Activated CD4-positive, alpha-beta memory T cell treated with anti-CD3 and anti-CD28 coated beads for 36 hours (primary cell): ENCODE measurements at regions of chr3 and their contacts with region 1.

Region 1: DNA sequence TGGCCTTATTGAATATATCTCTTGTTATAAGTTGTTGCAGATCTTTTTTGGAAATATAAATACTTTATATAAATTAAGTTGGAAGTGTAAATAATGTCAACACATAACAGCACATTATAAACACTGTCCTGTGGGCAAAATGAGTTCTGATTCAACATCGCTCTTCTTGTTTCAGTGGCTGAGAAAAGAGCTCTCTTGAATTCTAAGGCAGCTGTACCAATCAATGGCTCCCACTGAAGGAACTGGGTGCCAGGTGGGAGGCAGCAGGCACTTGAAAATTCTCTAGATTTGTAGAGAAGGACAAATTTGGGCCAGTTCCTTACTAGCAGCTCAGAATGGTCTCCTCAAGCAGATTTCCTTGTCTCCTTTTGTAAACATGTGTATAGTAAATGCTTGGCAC is 45.6 kb downstream of the CHST2 start:
- DNase-seq: no peak
- H3K4me3 Mint-ChIP-seq: peak overlapping the region; percentile 22
- H3K27ac Mint-ChIP-seq: peak overlapping the region; percentile 87
- H3K4me1 Mint-ChIP-seq: peaks cover 56% of the 10 kb centered on the region
- H3K27me3 Mint-ChIP-seq: peaks cover 2% of the 10 kb centered on the region

Region 2: GRCh38 chr3:143060906-143061305 is 104.3 kb before region 1 on chr3:
- CTCF ChIA-PET with region 1: no interaction called
- POLR2A ChIA-PET with region 1: no interaction called
- intact Hi-C with region 1: loop called (anchors 1 kb)
- DNase-seq: no peak
- H3K4me3 Mint-ChIP-seq: no peak overlapping the region
- H3K27ac Mint-ChIP-seq: peak overlapping the region; percentile 42
- H3K4me1 Mint-ChIP-seq: peaks cover 22% of the 10 kb centered on the region
- H3K27me3 Mint-ChIP-seq: no peaks in the 10 kb centered on the region

Region 3: DNA sequence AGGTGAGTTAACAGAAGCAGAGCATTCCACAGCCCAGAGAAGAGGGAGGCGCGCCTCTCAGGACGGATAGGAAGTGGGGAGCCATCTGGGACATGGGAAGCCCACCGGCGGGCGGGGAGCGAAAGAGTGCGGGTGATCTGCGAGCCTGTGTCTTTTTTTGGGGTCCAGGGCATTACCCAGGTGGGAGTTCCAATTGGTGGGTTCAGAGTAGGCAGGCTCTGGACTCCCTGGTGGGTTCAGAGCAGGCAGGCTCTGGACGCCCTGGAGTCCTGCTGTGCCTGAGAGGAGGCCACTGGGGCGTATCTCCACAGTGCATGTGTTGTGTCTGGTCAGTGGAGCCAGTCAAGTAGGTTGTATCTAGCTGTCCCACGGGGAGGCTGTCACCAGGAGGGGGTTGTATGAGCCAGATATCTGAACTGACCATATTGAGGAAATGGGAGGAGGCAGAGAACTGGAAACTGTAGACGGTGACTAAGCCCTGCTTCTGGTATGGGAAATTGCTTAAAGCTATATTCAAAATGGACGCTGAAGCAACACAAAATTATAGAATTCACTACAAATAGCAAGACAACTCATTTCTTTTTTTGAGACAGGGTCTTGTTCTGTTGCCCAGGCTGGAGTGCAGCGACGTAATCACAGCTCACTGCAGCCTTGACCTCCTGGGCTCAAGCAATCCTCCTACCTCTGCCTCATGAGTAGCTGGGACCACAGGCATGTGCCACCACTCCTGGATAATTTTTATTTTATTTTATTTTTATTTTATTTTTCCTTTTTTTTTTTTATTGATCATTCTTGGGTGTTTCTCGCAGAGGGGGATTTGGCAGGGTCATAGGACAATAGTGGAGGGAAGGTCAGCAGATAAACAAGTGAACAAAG is 80.1 kb before region 1 on chr3:
- CTCF ChIA-PET with region 1: no interaction called
- POLR2A ChIA-PET with region 1: interaction called, 3 read pairs
- intact Hi-C with region 1: loop called (anchors 1 kb)
- DNase-seq: peak; percentile 36
- H3K4me3 Mint-ChIP-seq: peak overlapping the region; percentile 40
- H3K27ac Mint-ChIP-seq: no peak overlapping the region
- H3K4me1 Mint-ChIP-seq: peaks cover 34% of the 10 kb centered on the region
- H3K27me3 Mint-ChIP-seq: peaks cover 6% of the 10 kb centered on the region

Region 4: GRCh38 chr3:143276592-143276991 is 111.4 kb after region 1 on chr3:
- CTCF ChIA-PET with region 1: no interaction called
- POLR2A ChIA-PET with region 1: no interaction called
- intact Hi-C with region 1: loop called (anchors 1 kb)
- DNase-seq: no peak
- H3K4me3 Mint-ChIP-seq: no peak overlapping the region
- H3K27ac Mint-ChIP-seq: no peak overlapping the region
- H3K4me1 Mint-ChIP-seq: peaks cover 9% of the 10 kb centered on the region
- H3K27me3 Mint-ChIP-seq: no peaks in the 10 kb centered on the region

Region 5: GRCh38 chr3:143443851-143444331 is 278.7 kb after region 1 on chr3:
- CTCF ChIA-PET with region 1: no interaction called
- POLR2A ChIA-PET with region 1: no interaction called
- intact Hi-C with region 1: loop called (anchors 1 kb)
- DNase-seq: peak; percentile 55
- H3K4me3 Mint-ChIP-seq: no peak overlapping the region
- H3K27ac Mint-ChIP-seq: no peak overlapping the region
- H3K4me1 Mint-ChIP-seq: peaks cover 29% of the 10 kb centered on the region
- H3K27me3 Mint-ChIP-seq: no peaks in the 10 kb centered on the region